ENCODE measurements at regions of chr7 and their contacts with region 1.

Region 1: DNA sequence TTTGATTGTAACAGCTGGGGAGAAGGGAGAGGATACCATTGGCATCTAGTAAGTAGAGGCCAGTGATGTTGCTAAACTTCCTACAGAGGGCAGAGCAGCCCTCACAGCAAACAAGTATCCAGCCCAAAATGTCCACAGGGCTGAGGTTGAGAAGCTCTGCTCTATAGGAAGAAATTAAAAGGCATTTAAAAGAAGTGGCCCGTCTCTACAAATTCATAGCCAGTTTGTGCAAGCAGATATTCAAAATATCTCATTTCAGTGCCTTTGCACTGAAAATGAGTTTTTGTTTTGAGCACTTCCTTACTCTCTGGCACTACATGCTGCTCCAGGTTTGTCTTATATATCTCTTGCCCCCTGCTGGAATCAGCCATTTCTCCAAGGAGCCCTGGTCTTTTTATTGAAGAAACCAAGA is 330.0 kb downstream of the BBS9 start:
- DNase-seq: peak; percentile 27
- H3K4me3 ChIP-seq: no peak overlapping the region
- H3K27ac ChIP-seq: no peak overlapping the region
- H3K4me1 ChIP-seq: no peaks in the 10 kb centered on the region
- H3K27me3 ChIP-seq: no peaks in the 10 kb centered on the region
- CTCF ChIP-seq: peak; percentile 63
- EP300 ChIP-seq: no peak
- RAD21 ChIP-seq: peak; percentile 75

Region 2: GRCh38 chr7:33471636-33472242 is 12.4 kb after region 1 on chr7:
- CTCF ChIA-PET with region 1: interaction called, 19 read pairs
- POLR2A ChIA-PET with region 1: no interaction called
- DNase-seq: no peak
- H3K4me3 ChIP-seq: no peak overlapping the region
- H3K27ac ChIP-seq: peak overlapping the region in 1 of 2 experiments; percentile 15; a peak in 2 of 4 replicates
- H3K4me1 ChIP-seq: peaks cover 0 to 8% of the 10 kb centered on the region in 2 experiments; a peak in 2 of 4 replicates
- H3K27me3 ChIP-seq: no peaks in the 10 kb centered on the region
- CTCF ChIP-seq: no peak
- EP300 ChIP-seq: no peak
- RAD21 ChIP-seq: no peak

Region 3: GRCh38 chr7:33654676-33655075 is 195.3 kb after region 1 on chr7:
- CTCF ChIA-PET with region 1: no interaction called
- POLR2A ChIA-PET with region 1: no interaction called
- DNase-seq: no peak
- H3K4me3 ChIP-seq: no peak overlapping the region
- H3K27ac ChIP-seq: no peak overlapping the region
- H3K4me1 ChIP-seq: peaks cover 0 to 11% of the 10 kb centered on the region in 2 experiments; a peak in 2 of 4 replicates
- H3K27me3 ChIP-seq: no peaks in the 10 kb centered on the region
- CTCF ChIP-seq: no peak
- EP300 ChIP-seq: no peak
- RAD21 ChIP-seq: no peak

Region 4: DNA sequence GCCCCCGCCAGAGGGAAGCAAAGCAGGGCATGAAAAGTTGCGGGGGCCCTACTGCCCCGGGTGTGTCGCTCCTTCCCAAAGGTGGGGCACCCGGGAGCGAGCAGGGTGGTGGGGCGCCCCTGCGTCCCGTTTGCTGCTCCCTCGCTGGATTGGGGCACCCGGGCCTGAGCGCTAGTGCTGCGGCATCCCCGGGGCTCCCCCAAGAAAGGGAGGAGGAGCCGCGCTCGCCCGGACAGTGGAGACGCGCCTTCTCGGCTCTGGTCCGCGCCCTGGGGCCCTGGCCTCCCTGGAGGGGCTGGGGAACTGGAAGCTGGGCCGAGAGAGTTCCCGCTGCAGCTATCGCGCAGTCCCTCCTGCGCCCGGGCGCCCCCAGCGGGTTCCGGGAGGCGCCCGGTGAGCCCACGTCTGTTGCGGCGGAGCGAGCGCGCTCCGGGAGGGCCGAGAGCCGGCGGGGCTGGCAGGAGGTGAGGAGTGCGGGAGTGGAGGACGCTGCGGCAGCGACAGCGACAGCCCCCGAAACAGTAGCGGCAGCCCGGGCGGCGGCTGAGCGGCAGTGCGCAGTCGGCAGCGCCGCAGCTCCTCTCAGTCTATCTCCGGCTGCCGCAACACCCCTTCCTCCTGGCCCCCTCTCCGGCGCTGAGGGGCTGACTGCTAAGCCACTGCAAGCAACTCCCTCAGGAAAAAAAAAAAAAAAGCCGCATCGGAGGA is 445.5 kb after region 1 on chr7:
- CTCF ChIA-PET with region 1: interaction called, 11 read pairs
- POLR2A ChIA-PET with region 1: no interaction called
- DNase-seq: peak; percentile 84
- H3K4me3 ChIP-seq: peak overlapping the region; percentile 80 to 86
- H3K27ac ChIP-seq: peak overlapping the region in 1 of 2 experiments; percentile 66; a peak in 2 of 4 replicates
- H3K4me1 ChIP-seq: peaks cover 17 to 21% of the 10 kb centered on the region in 2 experiments; a peak in 3 of 4 replicates
- H3K27me3 ChIP-seq: no peaks in the 10 kb centered on the region
- CTCF ChIP-seq: peak; percentile 45
- EP300 ChIP-seq: peak in 1 of 2 experiments; percentile 27; a peak in 1 of 4 replicates
- RAD21 ChIP-seq: no peak

Measured in SK-N-SH (cell line).